HepG2 (cell line): ENCODE measurements at regions of chr1 and their contacts with region 1.

Region 1: GRCh38 chr1:3618881-3619671 is 5.7 kb upstream of the TPRG1L start:
- DNase-seq: peak; percentile 77
- ATAC-seq: peak; percentile 79
- H3K4me3 ChIP-seq: no peak overlapping the region
- H3K27ac ChIP-seq: no peak overlapping the region
- H3K4me1 ChIP-seq: peaks cover 40% of the 10 kb centered on the region
- H3K27me3 ChIP-seq: peaks cover 16 to 46% of the 10 kb centered on the region in 2 experiments
- CTCF ChIP-seq: peak; percentile 82
- EP300 ChIP-seq: no peak
- POLR2A ChIP-seq: no peak
- RAD21 ChIP-seq: peak; percentile 40; the same call in 1 of the 2 replicates

Region 2: DNA sequence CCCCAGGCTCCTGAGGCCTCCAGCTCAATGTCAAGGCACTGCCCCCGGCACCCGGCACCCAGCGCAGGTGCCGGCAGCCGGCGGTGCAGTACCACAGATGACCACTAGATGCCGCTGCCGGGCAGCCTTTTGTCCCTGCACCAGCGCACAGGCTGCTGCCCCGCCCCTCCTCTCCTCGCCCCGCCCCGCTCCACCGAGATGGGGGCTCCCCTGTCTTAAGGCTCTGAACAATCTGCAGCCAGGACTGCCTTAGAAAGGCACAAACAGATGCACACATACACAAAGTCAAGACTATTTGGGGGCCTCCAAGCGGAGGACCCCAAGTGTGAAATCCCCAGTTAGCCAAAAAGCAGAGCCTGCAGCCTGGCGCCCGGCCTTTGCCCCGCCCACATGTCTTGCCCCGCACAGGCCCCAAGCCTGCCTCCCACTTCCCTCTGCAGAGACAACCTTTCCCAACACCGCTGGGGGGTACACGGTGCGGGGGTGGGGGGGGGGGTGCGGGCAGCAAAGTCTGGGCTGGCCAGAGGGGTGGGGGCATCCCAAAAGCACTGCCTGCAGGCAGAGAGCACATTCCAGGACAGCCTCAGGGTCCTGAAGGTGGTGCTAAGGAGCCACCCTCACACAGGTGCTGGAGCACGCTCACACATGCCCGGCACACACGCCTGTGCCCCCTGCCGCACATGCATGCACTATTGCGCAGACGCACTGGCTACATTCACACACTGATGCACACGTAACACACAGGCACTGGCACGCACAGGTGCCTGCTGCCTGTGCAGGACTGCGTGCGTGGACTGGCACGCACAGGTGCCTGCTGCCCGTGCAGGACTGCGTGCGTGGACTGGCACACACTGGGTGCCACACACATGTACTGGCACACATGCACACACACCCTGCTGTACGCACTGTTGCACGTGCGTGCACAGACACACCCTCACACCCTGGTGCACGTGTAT is 127.5 kb before region 1 on chr1:
- CTCF ChIA-PET with region 1: interaction called, 11 read pairs
- POLR2A ChIA-PET with region 1: no interaction called
- in situ Hi-C with region 1: no loop called
- intact Hi-C with region 1: loop called (anchors 5 kb)
- DNase-seq: peak; percentile 24
- ATAC-seq: peak; percentile 71
- H3K4me3 ChIP-seq: no peak overlapping the region
- H3K27ac ChIP-seq: no peak overlapping the region
- H3K4me1 ChIP-seq: no peaks in the 10 kb centered on the region
- H3K27me3 ChIP-seq: peaks cover 7 to 27% of the 10 kb centered on the region in 2 experiments; a peak in 4 of 5 replicates
- CTCF ChIP-seq: peak; percentile 91
- EP300 ChIP-seq: no peak
- POLR2A ChIP-seq: no peak
- RAD21 ChIP-seq: peak; percentile 72

Region 3: DNA sequence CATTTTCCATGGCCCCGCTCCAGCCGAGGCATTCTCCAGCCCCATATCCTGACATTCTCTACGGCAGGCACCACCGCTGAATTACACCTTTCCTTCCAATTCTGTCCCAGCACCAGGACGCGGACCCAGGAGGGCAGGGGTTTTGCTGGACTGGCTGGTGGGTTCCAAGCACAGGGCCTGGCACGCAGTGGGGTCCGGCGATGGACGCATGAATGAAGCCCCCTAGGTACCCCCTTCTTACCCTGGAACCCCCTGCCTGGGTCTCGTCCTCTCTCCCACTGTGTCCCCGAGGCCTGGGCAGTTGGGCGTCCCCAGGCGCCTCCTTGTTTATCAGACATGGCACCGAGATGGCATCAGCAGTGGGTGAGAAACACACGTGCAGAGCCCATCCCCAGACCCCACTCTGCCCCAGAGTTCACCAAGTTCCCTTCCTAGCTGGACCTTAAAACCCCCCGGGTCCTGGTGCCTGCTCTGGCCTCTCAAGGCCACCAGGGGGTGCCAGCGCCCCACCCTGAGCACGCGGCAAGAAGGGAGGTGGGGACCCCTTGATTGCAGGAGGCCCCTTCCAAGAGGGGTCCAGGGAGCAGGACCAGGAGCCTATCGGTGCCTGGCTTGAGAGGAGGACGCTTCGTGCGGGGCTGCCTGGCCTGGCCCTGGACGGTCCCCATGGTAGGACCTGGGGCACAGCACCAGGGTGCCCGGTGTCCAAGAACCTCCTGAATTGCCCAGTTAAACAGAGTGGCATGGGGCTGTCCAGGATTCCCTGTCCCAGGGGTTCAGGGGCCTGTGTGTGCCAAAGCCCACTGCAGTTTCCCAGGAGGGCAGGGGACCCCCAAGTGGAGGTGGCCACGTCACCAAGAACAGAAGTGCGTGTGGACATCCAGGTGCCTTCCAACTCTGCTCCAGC is 53.9 kb before region 1 on chr1:
- CTCF ChIA-PET with region 1: interaction called, 32 read pairs
- POLR2A ChIA-PET with region 1: no interaction called
- in situ Hi-C with region 1: loop called (anchors 5 kb)
- intact Hi-C with region 1: loop called (anchors 1 kb)
- DNase-seq: no peak
- ATAC-seq: peak; percentile 41
- H3K4me3 ChIP-seq: no peak overlapping the region
- H3K27ac ChIP-seq: no peak overlapping the region
- H3K4me1 ChIP-seq: peaks cover 12% of the 10 kb centered on the region; the same call in 1 of the 2 replicates
- H3K27me3 ChIP-seq: peaks cover 2 to 34% of the 10 kb centered on the region in 2 experiments; a peak in 3 of 5 replicates
- CTCF ChIP-seq: peak; percentile 95
- EP300 ChIP-seq: no peak
- POLR2A ChIP-seq: no peak
- RAD21 ChIP-seq: peak; percentile 90

Region 4: GRCh38 chr1:3586932-3587678 is 32.0 kb before region 1 on chr1:
- CTCF ChIA-PET with region 1: interaction called, 13 read pairs
- POLR2A ChIA-PET with region 1: no interaction called
- in situ Hi-C with region 1: no loop called
- intact Hi-C with region 1: loop called (anchors 2 kb)
- DNase-seq: peak; percentile 41
- ATAC-seq: peak; percentile 66
- H3K4me3 ChIP-seq: peak overlapping the region in 2 of 3 experiments; percentile 2 to 29; a peak in 1 of 6 replicates
- H3K27ac ChIP-seq: no peak overlapping the region
- H3K4me1 ChIP-seq: peaks cover 27% of the 10 kb centered on the region
- H3K27me3 ChIP-seq: peaks cover 3 to 40% of the 10 kb centered on the region in 2 experiments
- CTCF ChIP-seq: no peak
- EP300 ChIP-seq: no peak
- POLR2A ChIP-seq: no peak
- RAD21 ChIP-seq: no peak